ENCODE measurements at regions of chr2 and their contacts with region 1.

Region 1: GRCh38 chr2:85420536-85421259 is 2.2 kb downstream of the SH2D6 start:
- DNase-seq: peak; percentile 73 to 96 (median 83)
- ATAC-seq: peak; percentile 88
- H3K4me3 ChIP-seq: peak overlapping the region; percentile 22
- H3K4me3 Mint-ChIP-seq: peak overlapping the region; percentile 60 to 96 (median 76)
- H3K27ac ChIP-seq: peak overlapping the region; percentile 23
- H3K27ac Mint-ChIP-seq: peak overlapping the region; percentile 38 to 100 (median 85)
- H3K4me1 ChIP-seq: peaks cover 20 to 22% of the 10 kb centered on the region in 2 donors
- H3K4me1 Mint-ChIP-seq: peaks cover 14 to 26% (median 16%) of the 10 kb centered on the region in 7 donors
- H3K27me3 ChIP-seq: no peaks in the 10 kb centered on the region
- H3K27me3 Mint-ChIP-seq: no peaks in the 10 kb centered on the region

Region 2: DNA sequence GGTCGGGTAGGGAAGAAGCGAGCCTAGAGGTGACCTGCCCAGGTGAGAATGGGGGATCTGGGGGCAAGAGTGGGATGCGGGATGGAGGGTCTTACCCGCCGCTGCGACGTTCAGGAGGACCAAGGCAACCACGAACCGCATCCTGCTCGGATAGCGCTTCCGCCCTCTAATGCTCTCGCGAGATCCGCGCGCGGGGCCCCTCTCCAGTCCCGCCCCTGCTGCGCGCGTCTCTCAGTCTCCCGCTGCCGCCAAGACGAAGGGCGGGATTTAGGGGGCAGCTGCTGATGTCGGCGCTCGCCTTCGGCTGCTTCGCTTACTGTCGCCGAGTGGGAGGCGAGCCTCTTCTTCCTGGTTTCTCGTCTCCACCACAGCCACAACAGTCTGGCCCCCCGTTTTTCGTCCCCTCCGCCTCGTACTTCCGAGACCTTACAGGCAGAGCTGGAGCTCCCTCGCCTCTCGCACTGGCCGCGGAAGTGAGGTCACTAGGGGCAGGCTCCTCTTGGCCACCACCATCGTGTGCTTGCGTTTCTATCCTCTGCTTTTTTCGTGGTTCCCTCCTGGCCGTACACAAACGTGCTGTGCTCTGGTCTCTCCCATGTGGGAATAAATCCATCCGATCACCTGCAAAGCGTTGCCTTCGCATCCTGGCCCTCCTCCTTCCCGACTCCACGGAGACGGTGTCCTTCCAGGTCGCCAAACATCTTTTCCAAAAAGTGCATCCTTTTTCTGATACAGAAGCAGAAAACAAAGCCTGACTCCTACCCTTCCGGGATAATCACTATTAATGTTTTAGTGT is 92.7 kb before region 1 on chr2 and contains the start of gene TGOLN2:
- CTCF ChIA-PET with region 1: no interaction called
- POLR2A ChIA-PET with region 1: interaction called, 15 read pairs
- intact Hi-C with region 1: loop called (anchors 1 kb)
- DNase-seq: peak; percentile 91 to 96 (median 95)
- ATAC-seq: peak; percentile 94
- H3K4me3 ChIP-seq: peak within 1 kb of the TSS; percentile 84
- H3K4me3 Mint-ChIP-seq: peak within 1 kb of the TSS; percentile 97 to 100 (median 99)
- H3K27ac ChIP-seq: peak within 1 kb of the TSS; percentile 92
- H3K27ac Mint-ChIP-seq: peak within 1 kb of the TSS; percentile 97 to 100 (median 99)
- H3K4me1 ChIP-seq: peaks cover 24 to 31% of the 10 kb centered on the region in 2 donors
- H3K4me1 Mint-ChIP-seq: peaks cover 31 to 51% (median 46%) of the 10 kb centered on the region in 7 donors
- H3K27me3 ChIP-seq: no peaks in the 10 kb centered on the region
- H3K27me3 Mint-ChIP-seq: no peaks in the 10 kb centered on the region
- total RNA-seq, gene TGOLN2: 144 to 200 (median 178) TPM

Region 3: GRCh38 chr2:85409845-85410583 is 10.7 kb before region 1 on chr2 and contains the start of gene CAPG:
- CTCF ChIA-PET with region 1: interaction called, 7 read pairs
- POLR2A ChIA-PET with region 1: interaction called, 10 read pairs
- intact Hi-C with region 1: loop called in 1 of 2 experiments (anchors 1 kb)
- DNase-seq: peak in 3 of 9 donors; percentile 27 to 59 (median 29)
- ATAC-seq: peak; percentile 60
- H3K4me3 ChIP-seq: peak within 1 kb of the TSS; percentile 63
- H3K4me3 Mint-ChIP-seq: peak within 1 kb of the TSS; percentile 66 to 94 (median 78)
- H3K27ac ChIP-seq: peak within 1 kb of the TSS; percentile 41
- H3K27ac Mint-ChIP-seq: peak within 1 kb of the TSS; percentile 33 to 81 (median 76)
- H3K4me1 ChIP-seq: peaks cover 30 to 55% of the 10 kb centered on the region in 2 donors
- H3K4me1 Mint-ChIP-seq: peaks cover 32 to 78% (median 56%) of the 10 kb centered on the region in 7 donors
- H3K27me3 ChIP-seq: no peaks in the 10 kb centered on the region
- H3K27me3 Mint-ChIP-seq: peaks cover 0 to 15% (median 0%) of the 10 kb centered on the region in 5 donors
- total RNA-seq, gene CAPG: 12.9 to 265 (median 29.7) TPM

Region 4: GRCh38 chr2:85551698-85552678 is 131.3 kb after region 1 on chr2:
- CTCF ChIA-PET with region 1: interaction called, 163 read pairs
- POLR2A ChIA-PET with region 1: interaction called, 41 read pairs
- intact Hi-C with region 1: loop called (anchors 1 kb)
- DNase-seq: peak; percentile 70 to 92 (median 88)
- ATAC-seq: peak; percentile 97
- H3K4me3 ChIP-seq: no peak overlapping the region
- H3K4me3 Mint-ChIP-seq: no peak overlapping the region
- H3K27ac ChIP-seq: no peak overlapping the region
- H3K27ac Mint-ChIP-seq: peak overlapping the region in 5 of 9 donors; percentile 12 to 62 (median 38)
- H3K4me1 ChIP-seq: no peaks in the 10 kb centered on the region
- H3K4me1 Mint-ChIP-seq: peaks cover 0 to 10% (median 6%) of the 10 kb centered on the region in 7 donors
- H3K27me3 ChIP-seq: no peaks in the 10 kb centered on the region
- H3K27me3 Mint-ChIP-seq: no peaks in the 10 kb centered on the region

Region 5: GRCh38 chr2:85602476-85603234 is 182.0 kb after region 1 on chr2 and contains the start of gene TMEM150A:
- CTCF ChIA-PET with region 1: no interaction called
- POLR2A ChIA-PET with region 1: interaction called, 3 read pairs
- intact Hi-C with region 1: loop called in 1 of 2 experiments (anchors 1 kb)
- DNase-seq: peak; percentile 68 to 91 (median 78)
- ATAC-seq: peak; percentile 97
- H3K4me3 ChIP-seq: peak within 1 kb of the TSS; percentile 99
- H3K4me3 Mint-ChIP-seq: peak within 1 kb of the TSS; percentile 89 to 98 (median 91)
- H3K27ac ChIP-seq: peak within 1 kb of the TSS; percentile 81
- H3K27ac Mint-ChIP-seq: peak within 1 kb of the TSS; percentile 42 to 96 (median 82)
- H3K4me1 ChIP-seq: peaks cover 7 to 9% of the 10 kb centered on the region in 2 donors
- H3K4me1 Mint-ChIP-seq: peaks cover 16 to 45% (median 37%) of the 10 kb centered on the region in 7 donors
- H3K27me3 ChIP-seq: no peaks in the 10 kb centered on the region
- H3K27me3 Mint-ChIP-seq: peaks cover 0 to 2% (median 0%) of the 10 kb centered on the region in 5 donors
- total RNA-seq, gene TMEM150A: 5.1 to 17.8 (median 11.2) TPM

Region 6: GRCh38 chr2:85707304-85707703 is 286.6 kb after region 1 on chr2:
- CTCF ChIA-PET with region 1: interaction called, 4 read pairs
- POLR2A ChIA-PET with region 1: no interaction called
- intact Hi-C with region 1: loop called in 1 of 2 experiments (anchors 1 kb)
- DNase-seq: peak in 8 of 9 donors; percentile 38 to 75 (median 66)
- ATAC-seq: peak; percentile 85
- H3K4me3 ChIP-seq: no peak overlapping the region
- H3K4me3 Mint-ChIP-seq: peak overlapping the region in 1 of 10 donors; percentile 6
- H3K27ac ChIP-seq: no peak overlapping the region
- H3K27ac Mint-ChIP-seq: peak overlapping the region in 1 of 9 donors; percentile 90
- H3K4me1 ChIP-seq: peaks cover 0 to 25% of the 10 kb centered on the region in 2 donors
- H3K4me1 Mint-ChIP-seq: peaks cover 0 to 74% (median 5%) of the 10 kb centered on the region in 7 donors
- H3K27me3 ChIP-seq: peaks cover 0 to 4% of the 10 kb centered on the region in 2 donors
- H3K27me3 Mint-ChIP-seq: peaks cover 0 to 7% (median 4%) of the 10 kb centered on the region in 5 donors

Measured in naive thymus-derived CD4-positive, alpha-beta T cell (primary cell).